HCT116 (cell line): ENCODE measurements at regions of chr1 and their contacts with region 1.

Region 1: GRCh38 chr1:203148125-203148524 is 20.6 kb downstream of the ADORA1 start:
- DNase-seq: peak; percentile 16
- ATAC-seq: peak; percentile 67
- H3K4me3 ChIP-seq: no peak overlapping the region
- H3K27ac ChIP-seq: no peak overlapping the region
- H3K4me1 ChIP-seq: peaks cover 3 to 21% of the 10 kb centered on the region in 2 experiments; a peak in 3 of 4 replicates
- H3K27me3 ChIP-seq: no peaks in the 10 kb centered on the region
- CTCF ChIP-seq: peak in 2 of 3 experiments; percentile 65 to 68; a peak in 4 of 6 replicates
- POLR2A ChIP-seq: no peak
- RAD21 ChIP-seq: no peak

Region 2: GRCh38 chr1:202871366-202871765 is 276.8 kb before region 1 on chr1:
- CTCF ChIA-PET with region 1: no interaction called
- POLR2A ChIA-PET with region 1: no interaction called
- RAD21 ChIA-PET with region 1: no interaction called
- intact Hi-C with region 1: no loop called
- DNase-seq: no peak
- ATAC-seq: no peak
- H3K4me3 ChIP-seq: no peak overlapping the region
- H3K27ac ChIP-seq: no peak overlapping the region
- H3K4me1 ChIP-seq: no peaks in the 10 kb centered on the region
- H3K27me3 ChIP-seq: no peaks in the 10 kb centered on the region
- CTCF ChIP-seq: no peak
- POLR2A ChIP-seq: no peak
- RAD21 ChIP-seq: no peak

Region 3: GRCh38 chr1:202905331-202905730 is 242.8 kb before region 1 on chr1:
- CTCF ChIA-PET with region 1: no interaction called
- POLR2A ChIA-PET with region 1: no interaction called
- RAD21 ChIA-PET with region 1: no interaction called
- intact Hi-C with region 1: no loop called
- DNase-seq: no peak
- ATAC-seq: no peak
- H3K4me3 ChIP-seq: no peak overlapping the region
- H3K27ac ChIP-seq: no peak overlapping the region
- H3K4me1 ChIP-seq: no peaks in the 10 kb centered on the region
- H3K27me3 ChIP-seq: no peaks in the 10 kb centered on the region
- CTCF ChIP-seq: no peak
- POLR2A ChIP-seq: no peak
- RAD21 ChIP-seq: no peak

Region 4: GRCh38 chr1:203127666-203128430 is 20.3 kb before region 1 on chr1 and contains the start of gene ADORA1:
- CTCF ChIA-PET with region 1: interaction called, 20 read pairs
- POLR2A ChIA-PET with region 1: no interaction called
- RAD21 ChIA-PET with region 1: no interaction called
- intact Hi-C with region 1: no loop called
- DNase-seq: peak; percentile 10
- ATAC-seq: peak; percentile 92
- H3K4me3 ChIP-seq: peak within 1 kb of the TSS; percentile 56 to 64
- H3K27ac ChIP-seq: no peak within 1 kb of the TSS; the same call in 1 of the 2 replicates
- H3K4me1 ChIP-seq: peaks cover 25 to 58% of the 10 kb centered on the region in 2 experiments; a peak in 3 of 4 replicates
- H3K27me3 ChIP-seq: peaks cover 7% of the 10 kb centered on the region; the same call in 1 of the 2 replicates
- CTCF ChIP-seq: 0 out of 6 replicates have a peak, but pooled peaks of 1 of the 3 experiments have one; percentile 14
- POLR2A ChIP-seq: no peak
- RAD21 ChIP-seq: no peak
- total RNA-seq, gene ADORA1: 2.8 TPM

Region 5: GRCh38 chr1:203133970-203134725 is 14.0 kb before region 1 on chr1:
- CTCF ChIA-PET with region 1: interaction called, 20 read pairs
- POLR2A ChIA-PET with region 1: no interaction called
- RAD21 ChIA-PET with region 1: no interaction called
- intact Hi-C with region 1: no loop called
- DNase-seq: no peak
- ATAC-seq: peak; percentile 51
- H3K4me3 ChIP-seq: no peak overlapping the region
- H3K27ac ChIP-seq: no peak overlapping the region
- H3K4me1 ChIP-seq: peaks cover 7 to 22% of the 10 kb centered on the region in 2 experiments; a peak in 3 of 4 replicates
- H3K27me3 ChIP-seq: no peaks in the 10 kb centered on the region
- CTCF ChIP-seq: no peak
- POLR2A ChIP-seq: no peak
- RAD21 ChIP-seq: no peak